Thyroid gland (tissue), 4 donors: ENCODE measurements at regions of chr7 and their contacts with region 1.

Region 1: GRCh38 chr7:21507626-21508343 is 35.1 kb upstream of the DNAH11 start:
- DNase-seq: peak; percentile 46 to 61
- H3K4me3 ChIP-seq: no peak overlapping the region
- H3K27ac ChIP-seq: no peak overlapping the region
- H3K4me1 ChIP-seq: peaks cover 0 to 13% of the 10 kb centered on the region in 2 donors
- H3K27me3 ChIP-seq: no peaks in the 10 kb centered on the region
- CTCF ChIP-seq: peak; percentile 18 to 83 (median 61)
- POLR2A ChIP-seq: no peak

Region 2: GRCh38 chr7:21269021-21269420 is 238.8 kb before region 1 on chr7:
- intact Hi-C with region 1: loop called (anchors 5 kb)
- DNase-seq: no peak
- H3K4me3 ChIP-seq: no peak overlapping the region
- H3K27ac ChIP-seq: no peak overlapping the region
- H3K4me1 ChIP-seq: no peaks in the 10 kb centered on the region
- H3K27me3 ChIP-seq: no peaks in the 10 kb centered on the region
- CTCF ChIP-seq: no peak
- POLR2A ChIP-seq: no peak